ENCODE measurements at regions of chr5 and their contacts with region 1.

Region 1: DNA sequence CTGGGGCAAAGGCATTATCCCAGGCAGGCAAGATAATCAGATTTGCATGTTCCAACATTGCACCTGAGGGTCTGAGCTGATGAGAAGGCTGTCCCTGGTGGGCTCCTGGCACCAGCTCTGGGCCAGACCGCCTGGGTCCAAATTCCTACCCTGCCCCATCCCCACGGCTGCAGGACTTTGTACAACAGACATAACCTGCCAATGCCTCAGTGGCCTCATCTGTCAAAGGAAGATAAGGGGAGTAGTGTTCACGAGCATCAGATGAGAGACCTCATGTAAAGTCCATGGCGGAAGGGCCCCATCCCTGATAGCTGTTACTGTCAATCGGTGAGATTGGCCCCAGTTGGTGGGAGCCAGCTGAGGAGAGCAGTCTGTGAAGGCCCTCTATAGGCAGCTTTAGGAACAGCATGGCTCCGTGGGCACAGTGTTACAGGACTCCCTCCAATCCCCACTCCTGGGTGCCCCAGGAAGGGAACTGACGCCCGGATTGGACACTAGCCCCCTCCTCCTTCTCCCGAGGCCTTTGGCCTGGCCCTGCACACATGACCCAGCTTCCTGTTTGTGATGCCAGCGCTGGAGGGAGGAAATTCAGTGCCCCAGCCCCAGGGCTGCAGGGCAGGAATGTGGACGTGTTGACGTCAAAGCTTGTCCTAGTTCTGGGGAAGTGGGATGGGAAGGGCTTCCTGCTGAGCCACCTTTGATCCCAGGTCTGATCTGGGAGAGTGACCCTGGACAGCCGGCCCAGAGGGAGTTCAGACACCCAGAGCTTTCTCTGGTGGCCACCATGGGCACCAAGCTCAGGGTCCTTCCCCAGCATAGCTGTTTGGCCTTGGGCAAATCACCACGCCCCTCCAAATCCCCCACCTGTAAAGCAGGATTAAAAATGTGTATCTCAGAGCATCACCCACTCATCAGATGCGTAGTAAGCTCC is 56.2 kb downstream of the DUSP1 start:
- DNase-seq: peak; percentile 82 to 89 (median 87)
- ATAC-seq: peak; percentile 64 to 81 (median 77)
- H3K4me3 ChIP-seq: peak overlapping the region in 1 of 12 donors; percentile 9
- H3K27ac ChIP-seq: peak overlapping the region; percentile 59 to 95 (median 78)
- H3K4me1 ChIP-seq: peaks cover 4 to 48% (median 38%) of the 10 kb centered on the region in 12 donors
- H3K27me3 ChIP-seq: no peaks in the 10 kb centered on the region
- CTCF ChIP-seq: peak; percentile 76 to 93 (median 86)
- POLR2A ChIP-seq: no peak

Region 2: GRCh38 chr5:172312286-172312685 is 402.5 kb before region 1 on chr5:
- intact Hi-C with region 1: no loop called
- DNase-seq: no peak
- ATAC-seq: no peak
- H3K4me3 ChIP-seq: no peak overlapping the region
- H3K27ac ChIP-seq: peak overlapping the region in 1 of 12 donors; percentile 46
- H3K4me1 ChIP-seq: no peaks in the 10 kb centered on the region
- H3K27me3 ChIP-seq: no peaks in the 10 kb centered on the region
- CTCF ChIP-seq: no peak
- POLR2A ChIP-seq: no peak

Region 3: DNA sequence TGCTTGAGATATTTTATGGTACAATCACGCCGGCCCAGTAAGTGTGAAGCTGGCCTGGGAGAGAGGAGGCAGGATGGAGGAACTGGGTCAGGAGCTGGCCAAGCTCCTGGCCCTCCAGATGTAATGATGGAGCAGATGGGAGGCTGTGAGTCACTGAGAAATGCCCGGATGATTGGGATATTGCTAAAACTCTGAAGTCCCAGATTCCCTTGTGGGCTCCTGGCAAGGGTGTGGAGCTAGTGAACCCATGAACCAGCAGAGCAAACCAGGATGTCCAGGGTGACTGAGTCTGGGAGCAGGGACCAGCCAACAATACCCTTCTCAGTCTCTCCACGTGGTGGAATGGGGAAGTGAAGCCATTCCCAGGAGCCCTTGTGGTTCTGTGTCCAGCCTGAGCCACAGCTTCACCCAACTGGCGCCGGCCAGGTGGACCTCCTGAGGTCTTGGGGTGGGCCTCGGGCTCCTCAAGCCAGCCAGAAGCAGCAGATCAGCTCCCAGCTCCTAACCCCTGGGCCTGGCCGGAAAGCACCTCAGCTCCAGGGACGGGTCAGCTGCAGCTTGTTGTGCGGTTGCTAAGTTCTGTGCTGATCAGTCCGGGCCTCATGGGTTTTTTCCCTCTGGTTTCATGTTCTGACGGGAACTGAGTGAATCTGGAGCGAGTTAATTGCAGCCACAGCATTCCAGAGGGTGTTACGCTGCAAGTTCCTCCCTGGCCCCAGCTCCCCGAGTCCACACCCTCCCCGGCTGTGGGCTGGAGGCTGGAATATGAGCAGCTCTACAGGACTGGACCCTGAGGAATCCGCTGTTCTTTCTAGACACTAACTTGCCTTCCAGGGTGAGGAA is 18.6 kb after region 1 on chr5:
- intact Hi-C with region 1: no loop called
- DNase-seq: peak; percentile 84 to 91 (median 88)
- ATAC-seq: peak; percentile 88 to 94 (median 92)
- H3K4me3 ChIP-seq: peak overlapping the region in 2 of 12 donors; percentile 12 to 16
- H3K27ac ChIP-seq: peak overlapping the region; percentile 86 to 100 (median 96)
- H3K4me1 ChIP-seq: peaks cover 6 to 31% (median 24%) of the 10 kb centered on the region in 12 donors
- H3K27me3 ChIP-seq: no peaks in the 10 kb centered on the region
- CTCF ChIP-seq: no peak
- POLR2A ChIP-seq: peak in 1 of 2 donors; percentile 49

Region 4: GRCh38 chr5:172748341-172748843 is 33.6 kb after region 1 on chr5:
- intact Hi-C with region 1: loop called in 3 of 10 experiments (anchors 1 to 2 kb)
- DNase-seq: peak; percentile 90 to 96 (median 93)
- ATAC-seq: peak; percentile 72 to 91 (median 85)
- H3K4me3 ChIP-seq: peak overlapping the region in 8 of 12 donors; percentile 6 to 28 (median 14)
- H3K27ac ChIP-seq: peak overlapping the region; percentile 76 to 97 (median 92)
- H3K4me1 ChIP-seq: peaks cover 7 to 84% (median 44%) of the 10 kb centered on the region in 12 donors
- H3K27me3 ChIP-seq: no peaks in the 10 kb centered on the region
- CTCF ChIP-seq: peak in 1 of 12 donors; percentile 10
- POLR2A ChIP-seq: peak in 1 of 2 donors; percentile 61

Region 5: DNA sequence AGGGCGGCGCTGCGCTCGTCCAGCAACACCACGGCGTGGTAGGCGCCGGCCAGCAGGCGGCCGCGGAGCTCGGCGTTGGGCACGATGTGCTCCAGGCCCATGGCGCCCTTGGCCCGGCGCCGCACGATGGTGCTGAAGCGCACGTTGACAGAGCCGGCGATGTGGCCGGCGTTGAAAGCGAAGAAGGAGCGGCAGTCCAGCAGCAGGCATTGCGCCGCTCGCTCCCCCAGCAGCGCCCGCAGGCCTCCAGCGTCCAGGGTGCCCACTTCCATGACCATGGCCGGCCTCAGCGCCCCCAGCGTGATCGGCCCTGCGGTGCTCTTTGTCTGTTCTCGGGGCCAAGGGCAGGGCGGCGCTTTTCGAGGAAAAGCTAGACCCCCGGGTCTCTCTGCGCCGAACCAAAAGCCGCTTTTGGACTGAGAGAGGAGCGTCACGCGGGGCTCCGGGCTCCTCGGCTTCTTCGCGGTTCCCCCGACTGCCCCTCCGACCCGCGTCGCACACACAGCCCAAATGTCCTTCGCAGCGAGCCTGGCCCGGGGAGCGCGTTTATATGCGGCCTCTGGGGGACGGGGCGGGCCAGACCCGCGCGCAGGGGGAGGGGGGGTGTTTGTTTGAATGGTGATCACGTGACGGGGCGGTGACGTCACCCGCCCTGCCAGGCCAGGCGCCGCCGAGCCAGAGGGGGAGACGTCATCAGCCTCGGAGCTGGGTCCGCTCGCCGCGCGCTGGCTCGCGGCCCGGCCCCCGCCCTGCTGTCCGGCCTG is 56.1 kb after region 1 on chr5 and contains the start of gene DUSP1:
- intact Hi-C with region 1: loop called (anchors 1 to 5 kb)
- DNase-seq: peak; percentile 100
- ATAC-seq: peak; percentile 46 to 85 (median 66)
- H3K4me3 ChIP-seq: peak within 1 kb of the TSS; percentile 66 to 98 (median 88)
- H3K27ac ChIP-seq: peak within 1 kb of the TSS; percentile 95 to 100 (median 100)
- H3K4me1 ChIP-seq: peaks cover 1 to 82% (median 25%) of the 10 kb centered on the region in 12 donors
- H3K27me3 ChIP-seq: no peaks in the 10 kb centered on the region
- CTCF ChIP-seq: peak in 10 of 12 donors; percentile 15 to 53 (median 44)
- POLR2A ChIP-seq: peak; percentile 96 to 100
- total RNA-seq, gene DUSP1: 39.9 to 335 (median 78.2) TPM

Region 6: GRCh38 chr5:172860520-172861443 is 146.0 kb after region 1 on chr5:
- intact Hi-C with region 1: loop called in 1 of 10 experiments (anchors 5 kb)
- DNase-seq: peak; percentile 88 to 95 (median 90)
- ATAC-seq: peak; percentile 87 to 93 (median 90)
- H3K4me3 ChIP-seq: peak overlapping the region in 9 of 12 donors; percentile 7 to 26 (median 21)
- H3K27ac ChIP-seq: peak overlapping the region; percentile 87 to 97 (median 94)
- H3K4me1 ChIP-seq: peaks cover 24 to 76% (median 59%) of the 10 kb centered on the region in 12 donors
- H3K27me3 ChIP-seq: no peaks in the 10 kb centered on the region
- CTCF ChIP-seq: no peak
- POLR2A ChIP-seq: peak in 1 of 2 donors; percentile 53

Region 7: GRCh38 chr5:172910828-172911627 is 196.3 kb after region 1 on chr5:
- intact Hi-C with region 1: loop called in 2 of 10 experiments (anchors 2 to 10 kb)
- DNase-seq: peak; percentile 55 to 86 (median 73)
- ATAC-seq: peak; percentile 63 to 83 (median 70)
- H3K4me3 ChIP-seq: no peak overlapping the region
- H3K27ac ChIP-seq: peak overlapping the region; percentile 28 to 83 (median 62)
- H3K4me1 ChIP-seq: peaks cover 0 to 35% (median 15%) of the 10 kb centered on the region in 12 donors
- H3K27me3 ChIP-seq: no peaks in the 10 kb centered on the region
- CTCF ChIP-seq: peak in 7 of 12 donors; percentile 16 to 46 (median 25)
- POLR2A ChIP-seq: no peak

Region 8: GRCh38 chr5:173283318-173284288 is 568.8 kb after region 1 on chr5:
- intact Hi-C with region 1: loop called in 7 of 10 experiments (anchors 5 to 10 kb)
- DNase-seq: peak; percentile 78 to 92 (median 87)
- ATAC-seq: peak; percentile 49 to 89 (median 89)
- H3K4me3 ChIP-seq: peak overlapping the region in 10 of 12 donors; percentile 16 to 45 (median 36)
- H3K27ac ChIP-seq: peak overlapping the region in 8 of 12 donors; percentile 12 to 74 (median 63)
- H3K4me1 ChIP-seq: peaks cover 0 to 27% (median 4%) of the 10 kb centered on the region in 12 donors
- H3K27me3 ChIP-seq: peaks cover 0 to 45% (median 5%) of the 10 kb centered on the region in 9 donors
- CTCF ChIP-seq: peak; percentile 70 to 91 (median 73)
- POLR2A ChIP-seq: no peak